ENCODE measurements at regions of chr20 and their contacts with region 1.

Region 1: GRCh38 chr20:48695207-48695635 is 132.6 kb downstream of the PREX1 start:
- DNase-seq: no peak
- ATAC-seq: no peak
- H3K4me3 Mint-ChIP-seq: no peak overlapping the region
- H3K27ac Mint-ChIP-seq: peak overlapping the region; percentile 14
- H3K4me1 Mint-ChIP-seq: peaks cover 24% of the 10 kb centered on the region
- H3K27me3 Mint-ChIP-seq: no peaks in the 10 kb centered on the region
- CTCF ChIP-seq: no peak

Region 2: GRCh38 chr20:48676795-48677460 is 18.3 kb before region 1 on chr20:
- CTCF ChIA-PET with region 1: no interaction called
- POLR2A ChIA-PET with region 1: no interaction called
- intact Hi-C with region 1: no loop called
- DNase-seq: no peak
- ATAC-seq: no peak
- H3K4me3 Mint-ChIP-seq: no peak overlapping the region
- H3K27ac Mint-ChIP-seq: peak overlapping the region; percentile 18
- H3K4me1 Mint-ChIP-seq: peaks cover 11% of the 10 kb centered on the region
- H3K27me3 Mint-ChIP-seq: no peaks in the 10 kb centered on the region
- CTCF ChIP-seq: no peak

Region 3: DNA sequence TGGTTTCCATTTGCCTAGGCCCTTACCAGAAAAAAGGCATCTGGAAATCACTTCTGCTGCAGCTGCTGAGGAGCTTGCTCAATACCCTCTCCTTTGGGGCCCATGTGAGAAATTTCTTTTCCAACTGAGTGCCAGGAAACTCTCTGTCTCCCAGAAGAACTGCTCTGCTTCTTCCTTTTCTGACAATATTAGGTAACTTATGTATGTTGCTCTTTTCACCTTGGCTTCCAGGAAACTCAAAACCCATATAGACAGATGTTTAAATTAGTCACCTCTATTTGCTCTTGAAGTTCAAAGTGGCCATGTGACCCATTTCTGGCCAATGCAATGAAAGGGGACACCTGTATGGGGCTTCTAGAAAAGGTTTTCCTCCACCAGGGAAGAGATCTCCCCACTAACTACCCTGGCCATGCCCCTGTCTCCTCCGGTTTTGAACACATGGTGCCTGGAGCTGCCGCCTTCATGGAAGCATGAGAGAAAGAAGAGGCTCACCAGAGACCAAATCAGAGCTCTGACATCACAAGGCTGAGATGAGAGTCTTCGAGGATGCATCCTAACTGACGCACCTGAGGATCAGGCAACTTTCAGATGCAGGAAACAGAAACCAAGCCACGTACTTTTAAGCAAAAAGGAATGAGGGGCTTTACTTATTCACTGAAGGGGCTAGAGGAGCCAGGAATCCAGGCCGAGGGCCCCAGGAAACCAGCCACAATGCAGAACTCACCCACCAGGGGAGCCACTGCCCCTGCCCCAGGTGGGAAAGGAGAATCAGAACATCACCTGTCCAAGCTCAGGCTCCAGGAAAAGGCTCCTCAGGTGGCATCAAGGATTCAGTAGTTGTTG is 11.2 kb after region 1 on chr20:
- CTCF ChIA-PET with region 1: interaction called, 12 read pairs
- POLR2A ChIA-PET with region 1: interaction called, 4 read pairs
- intact Hi-C with region 1: no loop called
- DNase-seq: no peak
- ATAC-seq: peak; percentile 59
- H3K4me3 Mint-ChIP-seq: no peak overlapping the region
- H3K27ac Mint-ChIP-seq: peak overlapping the region; percentile 62
- H3K4me1 Mint-ChIP-seq: peaks cover 42% of the 10 kb centered on the region
- H3K27me3 Mint-ChIP-seq: no peaks in the 10 kb centered on the region
- CTCF ChIP-seq: no peak

Region 4: GRCh38 chr20:48921899-48922821 is 226.9 kb after region 1 on chr20:
- CTCF ChIA-PET with region 1: no interaction called
- POLR2A ChIA-PET with region 1: no interaction called
- intact Hi-C with region 1: no loop called
- DNase-seq: no peak
- ATAC-seq: peak; percentile 35
- H3K4me3 Mint-ChIP-seq: peak overlapping the region; percentile 95
- H3K27ac Mint-ChIP-seq: peak overlapping the region; percentile 94
- H3K4me1 Mint-ChIP-seq: peaks cover 51% of the 10 kb centered on the region
- H3K27me3 Mint-ChIP-seq: no peaks in the 10 kb centered on the region
- CTCF ChIP-seq: no peak

Measured in activated CD8-positive, alpha-beta T cell treated with anti-CD3 and anti-CD28 coated beads for 36 hours (primary cell).